H1 (cell line): ENCODE measurements at regions of chr3 and their contacts with region 1.

Region 1: DNA sequence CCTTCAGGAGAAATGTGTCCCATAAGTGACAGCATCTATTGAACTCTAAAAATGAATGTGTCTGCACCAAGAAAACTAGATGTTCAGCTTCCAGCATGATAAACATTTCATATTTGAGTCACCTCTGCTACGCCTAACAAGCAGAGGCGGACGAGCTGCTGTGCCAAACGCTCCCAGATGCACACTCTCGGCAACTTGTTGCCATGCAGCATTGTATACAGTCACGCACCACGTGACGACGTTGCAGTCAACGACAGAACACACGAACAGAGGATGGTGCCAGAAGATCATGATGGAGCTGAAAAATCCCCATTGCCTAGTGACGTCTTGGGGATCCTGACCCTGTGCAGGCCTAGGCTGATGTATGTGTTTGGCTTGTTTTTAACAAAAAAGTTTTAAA is 137.5 kb downstream of the XXYLT1 start:
- DNase-seq: no peak
- H3K4me3 ChIP-seq: no peak overlapping the region
- H3K27ac ChIP-seq: no peak overlapping the region
- H3K4me1 ChIP-seq: no peaks in the 10 kb centered on the region
- H3K27me3 ChIP-seq: no peaks in the 10 kb centered on the region
- CTCF ChIP-seq: no peak
- EP300 ChIP-seq: no peak
- POLR2A ChIP-seq: no peak
- RAD21 ChIP-seq: no peak

Region 2: GRCh38 chr3:195117978-195118581 is 15.4 kb before region 1 on chr3:
- CTCF ChIA-PET with region 1: interaction called, 31 read pairs
- POLR2A ChIA-PET with region 1: no interaction called
- DNase-seq: no peak
- H3K4me3 ChIP-seq: no peak overlapping the region
- H3K27ac ChIP-seq: no peak overlapping the region
- H3K4me1 ChIP-seq: peaks cover 9 to 21% (median 13%) of the 10 kb centered on the region in 4 experiments
- H3K27me3 ChIP-seq: no peaks in the 10 kb centered on the region
- CTCF ChIP-seq: peak in 1 of 3 experiments; percentile 36; a peak in 1 of 4 replicates
- EP300 ChIP-seq: no peak
- POLR2A ChIP-seq: no peak
- RAD21 ChIP-seq: 0 out of 4 replicates have a peak, but pooled peaks have one; percentile 3 to 4

Region 3: DNA sequence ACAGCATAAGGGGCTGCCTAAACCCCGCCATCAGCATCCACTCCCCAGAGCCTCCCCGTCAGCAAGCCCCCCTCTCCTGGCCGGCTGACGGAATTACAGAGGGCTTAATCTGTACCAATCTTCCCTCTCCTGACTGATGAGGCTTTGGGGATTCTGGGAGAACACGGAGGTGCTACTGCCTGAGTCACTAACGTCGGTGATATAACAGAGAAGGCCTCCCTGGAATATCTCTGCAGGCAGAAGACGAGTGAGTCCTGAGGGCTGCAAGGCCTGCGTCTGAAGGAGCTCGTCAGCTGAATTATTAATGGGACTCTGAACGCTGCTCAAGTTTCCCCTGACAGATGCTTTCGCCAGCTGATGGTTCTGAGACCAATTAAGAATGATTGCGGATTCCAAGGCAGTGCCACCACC is 10.2 kb before region 1 on chr3:
- CTCF ChIA-PET with region 1: interaction called, 31 read pairs
- POLR2A ChIA-PET with region 1: interaction called, 3 read pairs
- DNase-seq: no peak
- H3K4me3 ChIP-seq: no peak overlapping the region
- H3K27ac ChIP-seq: no peak overlapping the region
- H3K4me1 ChIP-seq: peaks cover 4 to 15% (median 10%) of the 10 kb centered on the region in 4 experiments
- H3K27me3 ChIP-seq: no peaks in the 10 kb centered on the region
- CTCF ChIP-seq: peak; percentile 53 to 64 (median 62)
- EP300 ChIP-seq: no peak
- POLR2A ChIP-seq: no peak
- RAD21 ChIP-seq: peak; percentile 48 to 69; a peak in 3 of 4 replicates

Region 4: DNA sequence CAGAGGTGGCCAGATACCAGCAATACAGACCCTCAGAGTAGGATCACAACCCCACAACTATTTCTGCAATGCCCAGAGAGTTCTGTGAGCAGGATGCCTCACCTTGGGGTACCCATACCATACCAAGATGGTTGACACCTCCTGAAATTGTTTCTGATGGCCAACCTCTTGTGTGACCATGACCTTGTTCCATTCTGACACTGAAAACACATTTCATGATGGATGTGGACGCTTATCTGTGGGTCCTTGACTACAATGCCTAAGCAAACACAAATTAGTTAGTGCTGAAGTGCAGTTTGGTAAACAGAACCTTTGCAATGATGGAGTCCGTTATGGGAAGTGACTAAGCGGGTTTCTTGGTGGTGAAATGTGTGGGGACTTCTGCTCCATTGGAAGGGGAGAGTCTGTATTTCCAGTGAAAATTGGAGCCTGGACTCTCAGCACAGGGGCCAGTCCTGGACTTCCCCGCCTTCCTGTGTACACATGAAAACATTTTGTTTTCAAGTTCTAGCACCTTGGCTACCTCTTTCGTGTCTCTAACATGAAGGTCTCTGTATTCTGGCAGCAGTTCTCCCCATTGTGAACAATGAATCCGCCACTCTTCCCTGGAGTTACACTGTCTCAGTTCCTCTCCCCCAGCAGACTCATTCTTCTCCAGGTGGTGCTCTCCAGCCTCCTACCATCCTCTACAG is 31.3 kb after region 1 on chr3:
- CTCF ChIA-PET with region 1: no interaction called
- POLR2A ChIA-PET with region 1: no interaction called
- DNase-seq: no peak
- H3K4me3 ChIP-seq: no peak overlapping the region
- H3K27ac ChIP-seq: no peak overlapping the region; the same call in 1 of the 2 replicates
- H3K4me1 ChIP-seq: peaks cover 0 to 4% (median under 1%) of the 10 kb centered on the region in 4 experiments; a peak in 2 of 7 replicates
- H3K27me3 ChIP-seq: no peaks in the 10 kb centered on the region
- CTCF ChIP-seq: no peak
- EP300 ChIP-seq: no peak
- POLR2A ChIP-seq: no peak
- RAD21 ChIP-seq: no peak

Region 5: DNA sequence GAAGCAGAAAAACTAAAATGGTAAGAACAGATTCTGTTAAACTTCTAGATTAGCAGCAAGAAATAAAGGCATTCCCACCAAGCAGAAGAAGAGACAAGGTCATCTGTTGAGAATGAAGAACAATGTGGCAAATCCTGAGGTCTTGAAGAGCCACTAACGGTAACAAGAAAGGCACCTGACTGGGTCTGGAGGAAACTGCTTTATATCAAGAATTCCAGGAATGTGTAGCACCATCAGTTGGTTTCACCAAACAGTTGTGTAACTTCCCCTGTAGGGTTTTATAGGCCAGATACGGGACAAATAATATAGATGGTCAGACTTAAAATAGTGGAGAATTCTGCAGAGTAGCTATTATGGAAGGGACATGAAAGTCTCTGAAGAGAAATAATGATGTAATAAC is 252.1 kb after region 1 on chr3:
- CTCF ChIA-PET with region 1: no interaction called
- POLR2A ChIA-PET with region 1: no interaction called
- DNase-seq: no peak
- H3K4me3 ChIP-seq: peak overlapping the region in 1 of 4 experiments; percentile 17; a peak in 1 of 8 replicates
- H3K27ac ChIP-seq: no peak overlapping the region
- H3K4me1 ChIP-seq: peaks cover 0 to 20% (median 9%) of the 10 kb centered on the region in 4 experiments; a peak in 4 of 7 replicates
- H3K27me3 ChIP-seq: no peaks in the 10 kb centered on the region
- CTCF ChIP-seq: no peak
- EP300 ChIP-seq: 0 out of 3 replicates have a peak, but pooled peaks of 1 of the 2 experiments have one; percentile 35
- POLR2A ChIP-seq: no peak
- RAD21 ChIP-seq: no peak